ENCODE measurements at regions of chr22 and their contacts with region 1.

Region 1: DNA sequence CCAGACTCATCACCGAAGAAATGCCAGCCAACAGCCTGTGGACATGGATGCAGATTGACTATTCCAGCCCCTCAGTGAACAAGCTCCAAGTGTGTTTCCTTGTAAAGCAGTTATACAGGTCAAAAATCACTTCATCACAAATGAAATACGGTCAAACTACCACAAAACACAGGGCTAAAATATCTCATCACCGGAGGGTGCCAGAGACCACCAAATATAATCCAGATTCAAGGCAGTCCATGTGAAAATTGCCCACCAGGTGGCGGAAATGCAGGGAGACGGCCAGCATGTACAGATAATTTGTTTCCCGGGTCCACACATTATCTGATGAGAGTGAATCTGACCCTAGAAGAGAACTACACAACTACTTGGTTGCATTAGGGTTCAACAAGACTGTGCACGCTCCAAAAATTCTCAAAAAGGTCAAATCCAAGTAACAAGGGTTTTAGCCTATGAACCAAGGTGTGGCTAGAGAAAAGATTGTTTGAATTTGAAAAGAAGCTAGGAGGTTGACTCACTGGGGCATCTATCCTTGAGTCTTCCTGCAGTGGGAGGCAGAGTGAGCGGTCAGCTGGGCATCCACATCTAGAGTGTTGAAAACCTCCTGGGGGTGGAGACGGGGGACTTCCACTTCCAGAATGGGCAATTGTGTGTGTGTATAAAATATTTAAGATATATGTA is 71.7 kb downstream of the IGLL5 start:
- DNase-seq: peak; percentile 78
- ATAC-seq: peak; percentile 60
- H3K4me3 Mint-ChIP-seq: no peak overlapping the region
- H3K27ac Mint-ChIP-seq: no peak overlapping the region
- H3K4me1 Mint-ChIP-seq: peaks cover 2% of the 10 kb centered on the region
- H3K27me3 Mint-ChIP-seq: peaks cover 48% of the 10 kb centered on the region

Region 2: DNA sequence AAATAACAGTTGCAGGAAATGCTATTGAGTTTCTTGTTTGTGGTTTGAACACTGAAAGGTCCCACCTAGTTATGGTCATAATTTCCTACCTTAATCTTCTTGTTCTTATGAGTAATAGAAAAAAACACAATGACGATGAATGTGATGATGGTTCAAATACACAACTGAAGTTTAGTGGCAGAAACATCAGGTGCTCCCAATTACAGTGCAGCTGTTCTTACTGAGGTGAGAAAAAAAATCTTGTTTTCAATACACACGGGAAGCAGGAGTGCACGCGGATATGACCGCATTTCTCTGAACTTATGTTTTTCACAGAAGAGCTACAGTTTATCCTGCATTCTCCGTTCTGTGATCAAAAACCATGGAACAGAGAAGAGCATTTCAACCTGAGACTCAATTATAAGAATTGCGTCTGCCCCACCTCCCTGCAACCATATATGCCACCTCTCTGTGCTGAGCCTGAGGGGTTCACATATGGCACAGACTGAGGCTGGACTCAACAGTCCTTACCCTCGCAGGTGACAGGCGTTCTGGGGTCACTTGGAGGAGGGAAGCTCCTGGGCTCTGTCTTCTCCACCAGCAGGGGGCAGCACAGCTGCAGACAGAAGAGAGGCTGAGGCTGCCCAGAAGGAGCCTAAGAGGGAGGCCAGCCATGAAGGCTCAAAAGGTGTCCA is 171.4 kb before region 1 on chr22:
- CTCF ChIA-PET with region 1: interaction called, 29 read pairs
- DNase-seq: peak; percentile 78
- ATAC-seq: peak; percentile 86
- H3K4me3 Mint-ChIP-seq: no peak overlapping the region
- H3K27ac Mint-ChIP-seq: peak overlapping the region; percentile 17
- H3K4me1 Mint-ChIP-seq: peaks cover 28% of the 10 kb centered on the region
- H3K27me3 Mint-ChIP-seq: peaks cover 3% of the 10 kb centered on the region

Region 3: GRCh38 chr22:22848364-22848866 is 110.9 kb before region 1 on chr22:
- CTCF ChIA-PET with region 1: interaction called, 50 read pairs
- DNase-seq: peak; percentile 77
- ATAC-seq: peak; percentile 90
- H3K4me3 Mint-ChIP-seq: no peak overlapping the region
- H3K27ac Mint-ChIP-seq: no peak overlapping the region
- H3K4me1 Mint-ChIP-seq: peaks cover 10% of the 10 kb centered on the region
- H3K27me3 Mint-ChIP-seq: peaks cover 26% of the 10 kb centered on the region

Region 4: DNA sequence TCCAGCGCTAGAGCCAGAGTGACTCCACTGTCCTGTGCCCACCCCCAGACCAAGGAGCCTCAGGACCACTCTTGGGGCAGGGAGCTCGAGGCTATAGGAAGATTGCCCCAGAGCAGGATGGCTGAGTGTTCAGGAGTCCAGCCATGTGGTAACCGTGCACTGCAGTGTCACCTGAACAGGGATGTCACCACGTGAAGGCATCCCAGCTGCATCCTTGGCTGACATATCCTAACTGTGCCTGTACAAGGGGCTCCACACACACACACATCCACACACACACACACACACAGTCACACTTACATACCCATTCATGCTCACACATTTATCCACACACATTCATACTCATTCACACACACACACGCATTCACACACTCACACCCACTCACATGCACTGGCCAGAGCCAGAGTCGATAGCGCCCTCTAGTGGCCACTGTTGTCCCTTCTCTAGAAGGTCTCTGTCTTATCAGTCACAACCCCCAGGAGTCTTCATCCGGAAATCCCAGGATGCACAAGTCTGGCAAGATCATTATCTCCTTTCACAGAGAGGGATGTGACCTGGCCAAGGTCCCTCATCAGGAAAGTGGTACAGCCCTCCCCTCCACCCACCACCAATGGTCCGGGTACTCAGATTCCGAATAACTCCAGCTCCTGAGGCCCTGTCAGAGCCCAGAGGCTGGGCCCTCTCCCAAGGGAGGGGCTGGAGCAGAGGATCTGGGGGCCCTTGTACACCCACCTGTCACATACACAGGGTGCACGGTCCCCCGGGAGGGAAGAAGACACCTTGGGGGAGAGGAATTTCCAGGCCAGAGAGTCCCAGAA is 16.6 kb before region 1 on chr22:
- CTCF ChIA-PET with region 1: interaction called, 27 read pairs
- DNase-seq: peak; percentile 82
- ATAC-seq: peak; percentile 77
- H3K4me3 Mint-ChIP-seq: no peak overlapping the region
- H3K27ac Mint-ChIP-seq: no peak overlapping the region
- H3K4me1 Mint-ChIP-seq: peaks cover 4% of the 10 kb centered on the region
- H3K27me3 Mint-ChIP-seq: peaks cover 7% of the 10 kb centered on the region

Region 5: GRCh38 chr22:23219822-23220484 is 260.7 kb after region 1 on chr22:
- CTCF ChIA-PET with region 1: no interaction called
- DNase-seq: peak; percentile 81
- ATAC-seq: peak; percentile 80
- H3K4me3 Mint-ChIP-seq: peak overlapping the region; percentile 24
- H3K27ac Mint-ChIP-seq: peak overlapping the region; percentile 54
- H3K4me1 Mint-ChIP-seq: peaks cover 63% of the 10 kb centered on the region
- H3K27me3 Mint-ChIP-seq: no peaks in the 10 kb centered on the region

Region 6: GRCh38 chr22:23281406-23282088 is 322.3 kb after region 1 on chr22:
- CTCF ChIA-PET with region 1: interaction called, 32 read pairs
- DNase-seq: peak; percentile 89
- ATAC-seq: peak; percentile 77
- H3K4me3 Mint-ChIP-seq: no peak overlapping the region
- H3K27ac Mint-ChIP-seq: peak overlapping the region; percentile 28
- H3K4me1 Mint-ChIP-seq: peaks cover 34% of the 10 kb centered on the region
- H3K27me3 Mint-ChIP-seq: no peaks in the 10 kb centered on the region